K562 (cell line): ENCODE measurements at regions of chr1 and their contacts with region 1.

Region 1: DNA sequence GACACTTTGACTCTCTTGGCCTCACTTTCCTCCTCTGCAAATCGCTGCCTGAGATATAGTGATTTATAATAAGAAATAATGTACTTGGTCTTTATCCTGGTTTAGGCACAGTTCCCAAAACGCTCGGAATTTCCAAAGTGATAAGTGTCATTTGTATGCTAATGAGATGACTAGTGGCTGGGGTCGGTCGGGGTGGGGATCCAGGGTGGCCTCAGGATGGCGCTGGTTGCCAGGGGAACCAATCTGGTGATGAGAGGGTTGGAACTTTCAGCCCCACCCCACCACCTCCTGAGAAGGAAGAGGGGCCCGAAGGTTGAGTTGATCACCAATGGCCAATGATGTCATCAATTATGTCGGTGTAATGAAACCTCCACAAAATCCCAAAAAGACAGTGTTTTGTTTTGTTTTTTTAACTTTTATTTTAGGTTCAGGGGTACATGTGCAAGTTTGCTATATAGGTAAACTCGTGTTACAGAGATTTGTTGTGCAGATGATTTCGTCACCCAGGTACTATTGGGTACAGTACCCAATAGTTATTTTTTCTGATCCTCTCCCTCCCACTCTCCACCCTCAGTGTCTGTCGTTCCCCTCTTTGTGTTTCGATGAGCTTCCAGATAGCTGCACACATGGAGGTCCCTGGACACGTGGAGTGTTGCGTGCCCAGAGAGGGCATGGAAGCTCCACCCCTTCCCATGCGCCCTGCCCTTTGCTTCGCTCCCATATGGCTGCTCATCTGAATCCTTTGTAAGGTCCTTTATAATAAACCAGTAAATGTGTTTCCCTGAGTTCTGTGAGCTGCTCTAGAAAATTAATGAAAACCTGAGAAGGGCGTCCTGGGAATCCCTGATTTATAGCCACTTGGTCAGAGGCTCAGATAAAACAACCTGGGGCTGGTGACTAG is 97.2 kb downstream of the KCNN3 start:
- DNase-seq: no peak
- ATAC-seq: peak; percentile 43; the same call in 1 of the 3 replicates
- H3K4me3 ChIP-seq: no peak overlapping the region
- H3K27ac ChIP-seq: no peak overlapping the region
- H3K4me1 ChIP-seq: peaks cover 0 to 4% of the 10 kb centered on the region in 2 experiments; a peak in 1 of 5 replicates
- H3K27me3 ChIP-seq: peaks cover 41 to 81% of the 10 kb centered on the region in 2 experiments
- CTCF ChIP-seq: peak in 2 of 3 experiments; percentile 14 to 22; a peak in 1 of 6 replicates
- EP300 ChIP-seq: no peak
- POLR2A ChIP-seq: no peak
- RAD21 ChIP-seq: peak in 1 of 2 experiments; percentile 31; a peak in 1 of 4 replicates

Region 2: DNA sequence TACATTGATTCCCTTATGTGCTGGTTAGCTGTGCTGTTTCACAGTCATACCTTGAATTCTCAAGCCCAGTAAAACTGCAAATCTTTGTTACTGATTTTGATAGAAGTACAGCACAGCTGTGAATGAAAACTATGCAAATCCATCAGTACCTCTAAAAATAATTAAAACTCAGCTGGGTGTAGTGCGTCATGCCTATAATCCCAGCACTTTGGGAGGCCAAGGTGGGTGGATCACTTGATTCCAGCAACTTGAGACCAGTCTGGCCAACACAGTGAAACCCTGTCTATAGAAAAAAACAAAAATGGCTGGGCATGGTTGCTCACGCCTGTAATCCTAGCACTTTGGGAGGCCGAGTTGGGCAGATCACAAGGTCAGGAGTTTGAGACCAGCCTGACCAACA is 679.2 kb before region 1 on chr1:
- CTCF ChIA-PET with region 1: no interaction called
- POLR2A ChIA-PET with region 1: no interaction called
- in situ Hi-C with region 1: no loop called
- intact Hi-C with region 1: no loop called
- DNase-seq: no peak
- ATAC-seq: no peak
- H3K4me3 ChIP-seq: no peak overlapping the region
- H3K27ac ChIP-seq: no peak overlapping the region
- H3K4me1 ChIP-seq: no peaks in the 10 kb centered on the region
- H3K27me3 ChIP-seq: peaks cover 0 to 10% of the 10 kb centered on the region in 2 experiments; a peak in 1 of 5 replicates
- CTCF ChIP-seq: no peak
- EP300 ChIP-seq: no peak
- POLR2A ChIP-seq: no peak
- RAD21 ChIP-seq: no peak

Region 3: GRCh38 chr1:154878371-154879022 is 105.6 kb after region 1 on chr1:
- CTCF ChIA-PET with region 1: interaction called, 3 read pairs
- POLR2A ChIA-PET with region 1: no interaction called
- in situ Hi-C with region 1: loop called (anchors 5 kb)
- intact Hi-C with region 1: loop called (anchors 5 kb)
- DNase-seq: peak; percentile 80 to 85 (median 81)
- ATAC-seq: peak; percentile 99
- H3K4me3 ChIP-seq: no peak overlapping the region
- H3K27ac ChIP-seq: no peak overlapping the region
- H3K4me1 ChIP-seq: peaks cover under 1 to 8% of the 10 kb centered on the region in 2 experiments; a peak in 4 of 5 replicates
- H3K27me3 ChIP-seq: peaks cover 0 to 30% of the 10 kb centered on the region in 2 experiments; a peak in 2 of 5 replicates
- CTCF ChIP-seq: peak; percentile 91 to 94 (median 94)
- EP300 ChIP-seq: no peak
- POLR2A ChIP-seq: no peak
- RAD21 ChIP-seq: peak; percentile 92 to 97

Region 4: GRCh38 chr1:154936555-154937084 is 163.8 kb after region 1 on chr1 and contains the start of gene PMVK:
- CTCF ChIA-PET with region 1: no interaction called
- POLR2A ChIA-PET with region 1: no interaction called
- in situ Hi-C with region 1: no loop called
- intact Hi-C with region 1: loop called (anchors 5 kb)
- DNase-seq: peak; percentile 97 to 98 (median 97)
- ATAC-seq: peak; percentile 95
- H3K4me3 ChIP-seq: peak within 1 kb of the TSS; percentile 53
- H3K27ac ChIP-seq: peak within 1 kb of the TSS; percentile 100
- H3K4me1 ChIP-seq: peaks cover 18 to 37% of the 10 kb centered on the region in 2 experiments; a peak in 4 of 5 replicates
- H3K27me3 ChIP-seq: no peaks in the 10 kb centered on the region
- CTCF ChIP-seq: peak; percentile 58 to 75 (median 74)
- EP300 ChIP-seq: no peak; the same call in none of the 2 replicates
- POLR2A ChIP-seq: peak; percentile 81
- RAD21 ChIP-seq: peak; percentile 52 to 75
- polyA plus RNA-seq, gene PMVK: 1.1 to 3.8 TPM